Heart left ventricle (tissue), 16 donors: ENCODE measurements at regions of chr2 and their contacts with region 1.

Region 1: DNA sequence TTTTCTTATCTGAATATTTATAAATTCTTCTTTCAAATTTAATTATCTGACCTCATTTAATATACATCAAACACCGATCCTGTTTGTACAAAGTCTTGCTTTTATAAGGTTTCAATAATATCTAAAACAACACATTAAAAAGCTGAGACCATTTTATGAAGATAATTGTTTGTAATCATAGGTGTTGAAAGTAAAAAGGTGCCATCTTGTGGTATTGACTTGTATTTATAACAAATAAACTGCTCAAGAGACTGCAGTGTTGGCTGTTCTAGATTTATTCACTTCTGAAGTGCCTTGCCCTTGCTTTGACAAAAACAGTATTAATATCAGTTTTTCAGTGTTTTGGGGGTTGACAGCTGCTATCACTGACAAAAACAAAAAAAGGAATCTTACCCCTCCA is 286.8 kb upstream of the HNMT start:
- DNase-seq: no peak
- ATAC-seq: no peak
- H3K4me3 ChIP-seq: no peak overlapping the region
- H3K27ac ChIP-seq: no peak overlapping the region
- H3K4me1 ChIP-seq: peaks cover 0 to 7% (median 0%) of the 10 kb centered on the region in 12 donors
- H3K27me3 ChIP-seq: no peaks in the 10 kb centered on the region
- CTCF ChIP-seq: no peak
- POLR2A ChIP-seq: no peak

Region 2: DNA sequence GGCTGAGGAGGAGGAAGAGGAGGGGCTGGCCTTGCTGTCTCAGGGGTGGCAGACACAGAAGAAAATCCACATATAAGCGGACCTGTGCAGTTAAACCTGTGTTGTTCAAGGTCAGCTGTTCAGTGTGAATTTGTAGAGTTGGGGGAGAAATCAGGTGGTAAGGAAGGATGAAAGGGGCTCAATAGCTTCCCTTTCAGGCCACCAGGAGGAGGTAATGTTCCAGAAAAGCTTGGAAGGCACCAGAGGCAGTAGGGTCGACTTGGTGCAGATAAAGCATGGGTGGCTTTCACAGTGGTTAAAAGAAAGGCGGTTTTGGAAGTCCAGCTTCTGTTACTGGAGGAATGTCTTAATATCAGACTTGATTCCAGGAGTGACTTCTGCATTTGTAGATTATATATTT is 744.8 kb before region 1 on chr2:
- intact Hi-C with region 1: loop called in 1 of 10 experiments (anchors 10 kb)
- DNase-seq: no peak
- ATAC-seq: no peak
- H3K4me3 ChIP-seq: no peak overlapping the region
- H3K27ac ChIP-seq: no peak overlapping the region
- H3K4me1 ChIP-seq: no peaks in the 10 kb centered on the region
- H3K27me3 ChIP-seq: no peaks in the 10 kb centered on the region
- CTCF ChIP-seq: peak in 8 of 12 donors; percentile 15 to 31 (median 26)
- POLR2A ChIP-seq: no peak

Region 3: GRCh38 chr2:137467246-137467862 is 210.1 kb before region 1 on chr2:
- intact Hi-C with region 1: loop called in 1 of 10 experiments (anchors 10 kb)
- DNase-seq: peak in 1 of 5 donors; percentile 8
- ATAC-seq: no peak
- H3K4me3 ChIP-seq: no peak overlapping the region
- H3K27ac ChIP-seq: no peak overlapping the region
- H3K4me1 ChIP-seq: no peaks in the 10 kb centered on the region
- H3K27me3 ChIP-seq: no peaks in the 10 kb centered on the region
- CTCF ChIP-seq: peak; percentile 19 to 62 (median 44)
- POLR2A ChIP-seq: no peak